ENCODE measurements at regions of chr18 and their contacts with region 1.

Region 1: DNA sequence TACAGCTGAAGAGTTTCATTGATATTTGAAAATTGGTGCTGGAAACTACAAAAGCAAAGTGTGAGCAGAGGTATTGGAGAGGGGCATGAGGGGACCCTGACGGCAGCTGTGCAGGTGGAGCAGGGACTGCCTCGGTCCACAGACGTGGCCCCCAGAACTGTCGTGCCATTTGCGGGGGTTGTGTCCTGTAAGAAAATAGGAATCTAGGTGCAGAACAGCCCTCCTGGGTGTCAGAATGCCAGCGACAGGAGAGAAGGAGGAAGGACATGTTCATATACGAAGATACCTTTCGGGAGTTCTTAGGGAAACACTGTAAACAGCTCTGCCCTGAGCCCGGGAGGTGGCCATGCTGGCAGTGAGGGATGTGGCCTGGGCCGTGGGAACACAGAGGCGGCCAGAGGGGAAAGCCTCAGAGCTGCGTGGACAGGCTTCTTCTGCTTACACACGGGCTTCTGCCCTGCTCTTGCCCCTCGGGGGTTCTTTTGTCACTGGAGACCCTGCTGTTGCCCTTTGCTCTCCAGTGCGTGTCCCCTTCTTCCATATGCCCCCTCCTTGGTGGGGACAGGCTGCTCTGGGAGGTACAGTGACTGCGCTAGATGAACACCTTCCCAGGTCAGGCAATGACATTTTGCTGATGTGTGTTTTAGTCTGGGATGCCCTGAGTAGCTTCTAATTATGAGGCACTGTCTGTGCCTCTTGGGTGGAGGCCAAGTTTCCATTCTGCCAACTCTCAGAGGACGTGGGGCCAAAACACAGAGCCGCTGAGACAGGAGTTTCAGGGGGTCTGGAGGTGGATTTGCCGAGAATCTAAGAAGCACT is 81.9 kb upstream of the TXNDC2 start:
- DNase-seq: peak; percentile 85
- H3K4me3 ChIP-seq: no peak overlapping the region
- H3K27ac ChIP-seq: peak overlapping the region; percentile 66 to 80 (median 76)
- H3K4me1 ChIP-seq: peaks cover 0 to 56% (median 52%) of the 10 kb centered on the region in 4 donors
- H3K27me3 ChIP-seq: no peaks in the 10 kb centered on the region
- CTCF ChIP-seq: no peak
- EP300 ChIP-seq: no peak
- POLR2A ChIP-seq: no peak

Region 2: DNA sequence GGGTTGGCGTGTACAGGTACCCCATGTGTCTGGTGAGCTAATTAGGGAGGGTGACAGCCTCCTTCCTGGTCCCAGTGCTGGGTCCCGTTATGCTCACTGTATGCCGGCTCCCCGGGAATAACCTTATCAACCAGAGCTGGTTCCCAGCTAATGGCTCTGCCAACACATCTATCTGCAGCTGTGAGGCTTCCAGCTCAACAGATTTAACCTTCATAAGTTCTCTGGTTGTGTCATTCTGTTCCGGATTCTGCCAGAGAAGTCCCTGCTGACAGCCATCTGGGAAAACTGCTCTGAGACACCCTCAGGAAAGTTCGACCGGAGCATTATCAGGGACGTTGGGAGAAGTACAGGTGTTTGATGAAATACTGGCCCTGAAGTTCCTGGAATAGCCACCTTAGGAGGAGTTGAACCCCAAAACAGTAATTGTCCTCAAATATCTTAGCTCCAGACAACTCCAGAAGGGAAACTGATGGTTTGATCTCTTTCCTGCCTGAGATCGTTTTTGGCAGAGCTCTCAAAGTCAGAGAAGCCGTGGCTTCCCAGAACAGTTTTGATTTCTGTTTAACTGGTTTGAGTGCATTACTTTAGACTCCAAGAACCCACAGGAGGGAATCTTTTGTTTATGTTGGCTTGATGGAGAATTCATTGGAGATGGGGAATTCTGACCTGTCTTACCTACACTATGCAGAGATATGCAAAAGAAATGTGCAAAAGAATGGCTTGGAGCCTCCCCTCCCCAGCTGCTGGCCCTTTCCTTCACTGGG is 42.4 kb after region 1 on chr18:
- intact Hi-C with region 1: no loop called
- DNase-seq: no peak
- H3K4me3 ChIP-seq: no peak overlapping the region
- H3K27ac ChIP-seq: peak overlapping the region; percentile 58 to 75 (median 64)
- H3K4me1 ChIP-seq: peaks cover 0 to 50% (median 46%) of the 10 kb centered on the region in 4 donors
- H3K27me3 ChIP-seq: no peaks in the 10 kb centered on the region
- CTCF ChIP-seq: no peak
- EP300 ChIP-seq: no peak
- POLR2A ChIP-seq: no peak

Region 3: GRCh38 chr18:9869715-9870430 is 66.0 kb after region 1 on chr18:
- intact Hi-C with region 1: no loop called
- DNase-seq: no peak
- H3K4me3 ChIP-seq: no peak overlapping the region
- H3K27ac ChIP-seq: peak overlapping the region in 2 of 4 donors; percentile 5 to 39
- H3K4me1 ChIP-seq: peaks cover 0 to 20% (median 9%) of the 10 kb centered on the region in 4 donors
- H3K27me3 ChIP-seq: no peaks in the 10 kb centered on the region
- CTCF ChIP-seq: no peak
- EP300 ChIP-seq: no peak
- POLR2A ChIP-seq: no peak

Region 4: GRCh38 chr18:9913526-9914333 is 109.8 kb after region 1 on chr18 and contains the start of gene VAPA:
- intact Hi-C with region 1: loop called (anchors 5 kb)
- DNase-seq: peak; percentile 98
- H3K4me3 ChIP-seq: peak within 1 kb of the TSS; percentile 89 to 95 (median 90)
- H3K27ac ChIP-seq: peak within 1 kb of the TSS; percentile 98 to 100 (median 100)
- H3K4me1 ChIP-seq: peaks cover 0 to 41% (median 34%) of the 10 kb centered on the region in 4 donors
- H3K27me3 ChIP-seq: no peaks in the 10 kb centered on the region
- CTCF ChIP-seq: no peak
- EP300 ChIP-seq: no peak
- POLR2A ChIP-seq: peak; percentile 95
- total RNA-seq, gene VAPA: 252 to 336 (median 291) TPM

Region 5: DNA sequence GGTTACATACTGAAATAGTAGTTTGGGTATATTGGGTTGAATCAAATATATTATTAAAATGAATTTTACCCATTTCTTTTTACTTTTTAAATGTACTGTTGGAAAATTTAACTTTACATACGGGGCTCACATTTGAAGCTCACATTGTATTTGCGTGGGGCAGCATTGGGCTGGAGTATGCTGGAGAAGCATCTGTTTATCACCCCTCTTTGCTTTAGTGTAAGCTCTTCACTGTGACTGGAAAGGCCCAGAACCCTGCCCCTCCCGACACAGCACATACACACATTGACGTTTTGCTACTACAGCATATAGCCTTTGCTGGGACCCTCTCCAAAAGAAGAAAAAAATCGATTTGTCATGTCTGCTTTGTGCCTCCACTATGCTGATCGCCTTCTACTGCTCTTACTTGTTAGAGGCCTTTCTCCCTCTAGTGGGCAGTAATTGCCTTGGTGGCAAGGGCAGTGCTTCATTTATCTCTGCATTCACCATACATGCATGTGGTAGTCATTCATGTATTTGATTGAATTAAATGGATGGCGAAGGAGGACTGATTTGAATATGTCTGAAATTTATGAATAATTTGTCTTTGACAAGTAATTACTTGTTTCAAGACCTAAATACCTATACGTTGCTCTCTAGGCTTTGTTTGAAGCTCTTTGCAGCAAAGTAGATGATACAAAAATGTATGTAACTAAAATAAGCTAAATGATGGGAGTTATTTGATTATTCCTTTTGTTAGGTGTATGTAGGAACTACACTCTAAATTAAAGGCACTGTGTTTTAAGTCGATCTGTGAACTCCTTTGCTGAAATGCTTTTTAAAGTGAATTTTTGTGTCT is 147.3 kb after region 1 on chr18:
- intact Hi-C with region 1: loop called (anchors 5 kb)
- DNase-seq: no peak
- H3K4me3 ChIP-seq: no peak overlapping the region
- H3K27ac ChIP-seq: peak overlapping the region in 1 of 4 donors; percentile 9
- H3K4me1 ChIP-seq: peaks cover 0 to 35% (median 17%) of the 10 kb centered on the region in 4 donors
- H3K27me3 ChIP-seq: no peaks in the 10 kb centered on the region
- CTCF ChIP-seq: peak; percentile 11 to 78 (median 58)
- EP300 ChIP-seq: no peak
- POLR2A ChIP-seq: no peak